Activated CD8-positive, alpha-beta T cell treated with anti-CD3 and anti-CD28 coated beads, Interleukin-2, amount 10 ng/mL, durations not matched to agents 7 days and 5 days (primary cell): ENCODE measurements at regions of chr17 and their contacts with region 1.

Region 1: DNA sequence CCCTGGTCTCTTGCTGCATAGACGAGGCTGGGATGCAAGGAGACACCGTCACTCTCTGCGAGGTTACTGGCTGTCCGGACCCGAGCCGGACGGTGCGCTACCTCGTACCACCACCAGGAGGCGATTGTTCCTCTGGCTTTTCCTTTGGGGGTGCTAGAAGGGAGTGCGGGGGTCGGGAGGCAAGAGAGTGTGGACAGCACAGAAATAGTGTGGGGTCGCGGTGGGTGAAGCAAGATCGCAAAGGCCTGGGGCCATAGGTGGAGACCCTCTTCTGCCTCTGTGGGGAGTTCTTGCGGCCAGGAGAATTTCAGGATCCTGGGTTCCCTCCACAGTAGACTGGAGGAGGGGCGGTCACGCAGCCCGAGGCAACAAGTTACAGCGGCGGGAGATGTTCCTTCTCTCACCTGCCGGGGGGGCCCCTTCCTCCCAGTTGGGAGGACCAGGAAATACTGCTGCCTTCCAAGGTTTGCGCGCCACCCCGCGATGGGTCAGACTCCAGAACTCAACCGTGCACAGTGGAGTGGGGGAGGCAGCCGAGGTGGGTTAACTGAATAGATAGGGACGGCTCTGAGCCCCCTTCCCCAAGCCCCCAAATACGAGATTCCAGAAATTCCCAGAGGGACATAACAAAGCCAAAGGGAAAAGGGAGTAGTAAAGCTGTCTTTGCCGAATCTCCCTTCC is 6.9 kb downstream of the PHOSPHO1 start:
- DNase-seq: peak; percentile 78
- ATAC-seq: no peak
- H3K4me3 Mint-ChIP-seq: peak overlapping the region; percentile 53
- H3K27ac Mint-ChIP-seq: peak overlapping the region; percentile 83
- H3K4me1 Mint-ChIP-seq: peaks cover 73% of the 10 kb centered on the region
- H3K27me3 Mint-ChIP-seq: no peaks in the 10 kb centered on the region

Region 2: DNA sequence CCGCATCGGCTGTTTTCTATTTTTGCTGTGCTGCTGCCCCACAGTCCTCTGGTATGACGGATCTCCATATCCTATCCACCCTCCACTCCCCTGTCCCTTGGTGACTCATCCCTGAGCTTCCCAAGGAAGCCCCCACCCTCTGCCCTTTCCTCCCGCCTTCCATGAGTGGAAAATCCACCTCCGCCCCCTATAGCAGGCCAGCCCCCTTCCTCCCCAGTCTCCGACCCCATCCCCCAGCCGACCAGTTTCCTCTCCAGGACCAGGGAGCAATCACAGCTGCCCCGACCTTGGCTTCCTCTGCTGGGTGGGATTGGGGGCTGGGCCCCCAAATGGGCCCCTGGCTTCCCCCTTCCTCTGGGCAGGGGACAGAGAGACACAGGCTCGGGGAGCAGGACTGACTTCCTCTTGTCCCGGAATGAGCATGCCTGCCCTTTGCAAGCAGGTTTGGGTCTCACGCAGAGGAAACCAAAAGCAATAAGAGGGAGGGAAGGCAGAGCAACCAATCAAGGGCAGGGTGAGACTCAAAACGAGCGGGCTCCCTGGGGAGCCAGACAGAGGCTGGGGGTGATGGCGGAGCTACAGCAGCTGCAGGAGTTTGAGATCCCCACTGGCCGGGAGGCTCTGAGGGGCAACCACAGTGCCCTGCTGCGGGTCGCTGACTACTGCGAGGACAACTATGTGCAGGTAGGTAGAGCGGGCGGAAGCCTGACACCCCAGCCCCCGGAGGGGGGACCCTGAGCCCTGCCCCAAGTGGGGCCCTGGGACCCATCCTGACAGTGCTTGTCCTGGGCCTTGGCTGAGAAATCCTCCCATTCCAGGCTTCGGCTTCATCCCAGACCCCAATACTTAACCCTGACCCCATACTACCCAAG is 13.3 kb before region 1 on chr17 and contains the starts of genes ABI3 and GNGT2:
- CTCF ChIA-PET with region 1: interaction called, 77 read pairs
- POLR2A ChIA-PET with region 1: interaction called, 24 read pairs
- DNase-seq: peak; percentile 84
- ATAC-seq: peak; percentile 83
- H3K4me3 Mint-ChIP-seq: peak within 1 kb of the TSS; percentile 96
- H3K27ac Mint-ChIP-seq: peak within 1 kb of the TSS; percentile 89
- H3K4me1 Mint-ChIP-seq: peaks cover 62% of the 10 kb centered on the region
- H3K27me3 Mint-ChIP-seq: no peaks in the 10 kb centered on the region
- total RNA-seq, gene ABI3: 110 to 117 TPM
- total RNA-seq, gene GNGT2: 40.0 to 45.4 TPM